Activated naive CD4-positive, alpha-beta T cell treated with anti-CD3 and anti-CD28 coated beads for 36 hours (primary cell): ENCODE measurements at regions of chrX and their contacts with region 1.

Region 1: DNA sequence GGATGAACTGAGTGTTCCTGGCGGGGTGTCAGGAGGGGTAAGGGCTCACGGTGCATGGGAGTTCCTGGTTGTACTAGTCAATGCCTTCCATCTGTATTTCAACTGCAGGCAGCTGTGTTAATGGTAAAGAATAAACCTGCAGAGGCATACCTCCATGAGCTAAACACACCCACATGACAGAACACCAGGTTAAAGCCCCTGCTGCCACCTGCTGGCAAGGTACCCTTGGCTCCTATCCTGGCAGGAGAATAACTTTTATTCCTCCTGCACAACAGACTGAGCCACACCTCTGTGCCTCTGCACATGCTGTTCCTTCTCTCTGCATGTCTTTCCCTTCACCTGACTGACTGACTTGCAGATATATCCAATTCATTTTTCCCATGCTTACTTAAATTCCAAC is 11.1 kb downstream of the ITIH6 start:
- DNase-seq: peak; percentile 59
- H3K4me3 Mint-ChIP-seq: no peak overlapping the region
- H3K27ac Mint-ChIP-seq: no peak overlapping the region
- H3K4me1 Mint-ChIP-seq: no peaks in the 10 kb centered on the region
- H3K27me3 Mint-ChIP-seq: no peaks in the 10 kb centered on the region

Region 2: DNA sequence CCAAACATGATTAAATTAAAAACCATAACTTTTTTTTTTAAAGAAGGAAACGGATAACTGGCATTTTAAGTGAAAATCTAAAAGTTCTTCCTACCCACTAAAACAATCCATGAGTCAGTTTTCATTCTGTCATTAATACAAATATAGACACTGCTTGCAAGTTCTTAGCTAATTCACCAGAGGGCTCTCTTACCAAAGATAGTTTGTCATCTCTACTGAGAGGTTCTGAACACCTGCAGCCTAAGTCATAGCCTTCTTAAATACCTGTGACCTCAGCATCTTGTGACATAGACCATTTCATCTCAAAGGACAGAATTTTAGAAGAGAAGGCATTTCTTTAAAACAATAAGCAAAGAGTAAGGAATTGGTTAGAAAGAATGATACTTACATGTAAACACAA is 538.7 kb before region 1 on chrX:
- CTCF ChIA-PET with region 1: no interaction called
- intact Hi-C with region 1: loop called (anchors 5 kb)
- DNase-seq: no peak
- H3K4me3 Mint-ChIP-seq: no peak overlapping the region
- H3K27ac Mint-ChIP-seq: no peak overlapping the region
- H3K4me1 Mint-ChIP-seq: no peaks in the 10 kb centered on the region
- H3K27me3 Mint-ChIP-seq: no peaks in the 10 kb centered on the region

Region 3: DNA sequence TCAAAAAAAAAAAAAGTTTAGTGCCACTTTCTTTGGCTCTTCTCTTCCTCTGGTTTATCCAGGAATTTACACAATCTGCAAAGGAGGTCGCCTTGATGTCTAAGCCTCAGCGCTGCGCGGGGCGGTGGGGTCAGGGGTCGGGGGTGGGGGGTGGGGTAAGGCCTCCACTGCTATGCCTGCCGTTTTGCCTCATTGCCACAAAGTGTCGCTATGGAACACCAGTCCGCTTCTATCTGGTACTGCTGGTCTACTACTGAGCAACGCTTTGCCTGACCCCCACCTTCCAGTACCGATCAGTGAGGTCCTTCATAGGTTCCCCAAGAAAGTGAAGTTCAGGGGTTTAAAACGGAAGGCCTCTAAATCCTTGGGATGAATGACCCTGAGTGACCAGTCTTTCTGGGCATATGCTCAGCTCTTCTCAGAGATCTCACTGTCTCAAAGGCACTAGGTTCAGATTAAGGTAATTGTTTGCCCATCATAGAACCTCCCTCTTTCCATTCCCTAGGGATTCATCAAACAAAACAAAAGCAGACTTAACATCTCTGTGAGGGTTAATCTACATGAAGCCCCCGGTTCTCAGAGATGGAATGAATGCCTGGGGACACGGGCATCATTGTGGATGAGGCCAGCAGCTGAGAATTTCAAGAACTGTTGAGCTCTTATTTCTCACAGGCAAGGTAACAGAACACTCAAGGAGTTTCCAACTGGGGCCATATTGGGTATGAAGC is 363.6 kb before region 1 on chrX:
- CTCF ChIA-PET with region 1: no interaction called
- intact Hi-C with region 1: loop called (anchors 2 kb)
- DNase-seq: peak; percentile 25
- H3K4me3 Mint-ChIP-seq: no peak overlapping the region
- H3K27ac Mint-ChIP-seq: no peak overlapping the region
- H3K4me1 Mint-ChIP-seq: no peaks in the 10 kb centered on the region
- H3K27me3 Mint-ChIP-seq: no peaks in the 10 kb centered on the region